ENCODE measurements at regions of chr10 and their contacts with region 1.

Region 1: DNA sequence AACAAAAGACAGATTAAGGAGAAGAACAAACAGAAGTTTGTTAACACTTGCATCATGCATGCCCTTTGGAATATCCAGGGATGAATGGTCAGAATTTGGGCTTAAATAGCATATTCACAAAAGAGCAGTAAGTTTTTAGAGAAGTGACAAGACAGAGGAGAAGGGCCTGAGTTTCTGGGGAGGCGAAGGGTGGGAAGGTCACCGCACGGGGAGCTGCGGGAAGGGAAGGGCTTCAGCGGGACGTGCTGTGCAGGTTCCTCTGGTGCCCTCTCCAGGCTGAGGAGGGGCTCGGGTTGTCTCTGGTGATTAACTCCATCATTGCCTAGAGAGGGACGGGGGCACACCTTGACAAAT is 10.4 kb upstream of the ZNF22 start:
- DNase-seq: no peak

Region 2: GRCh38 chr10:44932517-44933450 is 57.5 kb before region 1 on chr10:
- intact Hi-C with region 1: loop called (anchors 5 kb)
- DNase-seq: peak; percentile 91